ENCODE measurements at regions of chr14 and their contacts with region 1.

Region 1: GRCh38 chr14:61025251-61026223 is 44.5 kb downstream of the SLC38A6 start:
- DNase-seq: peak; percentile 76
- H3K4me3 ChIP-seq: no peak overlapping the region
- H3K27ac ChIP-seq: no peak overlapping the region
- H3K4me1 ChIP-seq: no peaks in the 10 kb centered on the region
- H3K27me3 ChIP-seq: no peaks in the 10 kb centered on the region
- CTCF ChIP-seq: peak; percentile 64 to 85 (median 84)
- POLR2A ChIP-seq: no peak

Region 2: GRCh38 chr14:60622917-60623257 is 402.6 kb before region 1 on chr14:
- intact Hi-C with region 1: loop called (anchors 5 kb)
- DNase-seq: no peak
- H3K4me3 ChIP-seq: no peak overlapping the region
- H3K27ac ChIP-seq: peak overlapping the region; percentile 70 to 78
- H3K4me1 ChIP-seq: peaks cover 4% of the 10 kb centered on the region
- H3K27me3 ChIP-seq: no peaks in the 10 kb centered on the region
- CTCF ChIP-seq: no peak
- POLR2A ChIP-seq: no peak

Region 3: DNA sequence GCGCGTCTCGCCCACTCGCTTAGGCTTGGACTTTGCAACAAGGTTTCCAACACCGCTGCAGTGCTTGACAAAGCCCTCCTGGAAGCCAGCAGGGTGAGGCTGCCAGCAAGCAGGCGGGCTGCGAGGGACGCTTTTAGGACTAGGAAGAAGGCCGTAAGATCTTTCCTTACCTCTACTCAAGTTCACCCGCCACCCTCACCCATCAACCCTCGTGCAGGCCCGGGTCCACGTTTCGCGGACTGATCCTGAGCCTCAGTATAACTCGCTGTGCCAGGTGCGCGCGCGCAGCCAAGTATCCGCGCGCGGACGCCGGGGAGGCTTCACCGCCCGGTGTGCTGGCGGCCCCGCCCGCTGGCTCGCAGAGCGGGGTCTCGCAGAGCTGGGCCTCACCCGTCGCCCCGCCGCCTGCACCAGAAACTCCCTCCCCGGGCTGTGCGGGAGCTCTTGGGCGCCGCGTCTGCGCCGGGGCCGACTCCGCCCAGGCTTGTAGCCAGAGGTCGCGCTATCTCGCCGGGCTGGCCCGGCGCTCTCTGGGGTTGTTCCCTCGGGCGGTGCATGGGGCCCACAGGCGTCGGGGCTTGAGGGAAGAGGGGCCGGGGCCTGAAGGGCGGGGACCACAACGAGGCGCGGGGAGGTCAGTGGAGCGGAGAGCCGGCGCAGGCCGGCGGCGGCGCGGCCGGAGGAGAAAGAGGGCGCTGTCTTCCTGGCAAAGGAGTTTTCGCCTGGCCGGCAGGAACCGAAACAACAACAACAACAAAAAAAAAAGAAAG is 368.7 kb before region 1 on chr14:
- intact Hi-C with region 1: loop called (anchors 10 kb)
- DNase-seq: peak; percentile 69
- H3K4me3 ChIP-seq: peak overlapping the region; percentile 52 to 62
- H3K27ac ChIP-seq: peak overlapping the region; percentile 92 to 93
- H3K4me1 ChIP-seq: peaks cover 2% of the 10 kb centered on the region
- H3K27me3 ChIP-seq: no peaks in the 10 kb centered on the region
- CTCF ChIP-seq: peak; percentile 35 to 64 (median 62)
- POLR2A ChIP-seq: no peak

Region 4: GRCh38 chr14:60956202-60956601 is 69.3 kb before region 1 on chr14:
- intact Hi-C with region 1: no loop called
- DNase-seq: no peak
- H3K4me3 ChIP-seq: no peak overlapping the region
- H3K27ac ChIP-seq: no peak overlapping the region
- H3K4me1 ChIP-seq: no peaks in the 10 kb centered on the region
- H3K27me3 ChIP-seq: no peaks in the 10 kb centered on the region
- CTCF ChIP-seq: no peak
- POLR2A ChIP-seq: no peak

Measured in prostate gland (tissue), 2 donors.